Activated CD4-positive, alpha-beta T cell treated with anti-CD3 and anti-CD28 coated beads, Interleukin-2, amount 10 ng/mL, durations not matched to agents 24 days and 14 days (primary cell): ENCODE measurements at regions of chr4 and their contacts with region 1.

Region 1: GRCh38 chr4:151015459-151016347 is 619 bp upstream of the LRBA start:
- DNase-seq: peak; percentile 95
- H3K4me3 Mint-ChIP-seq: peak overlapping the region; percentile 97
- H3K27ac Mint-ChIP-seq: peak overlapping the region; percentile 99
- H3K4me1 Mint-ChIP-seq: peaks cover 27% of the 10 kb centered on the region
- H3K27me3 Mint-ChIP-seq: no peaks in the 10 kb centered on the region

Region 2: GRCh38 chr4:150436598-150437370 is 578.9 kb before region 1 on chr4:
- intact Hi-C with region 1: loop called (anchors 10 kb)
- DNase-seq: no peak
- H3K4me3 Mint-ChIP-seq: peak overlapping the region; percentile 2
- H3K27ac Mint-ChIP-seq: peak overlapping the region; percentile 20
- H3K4me1 Mint-ChIP-seq: peaks cover 8% of the 10 kb centered on the region
- H3K27me3 Mint-ChIP-seq: no peaks in the 10 kb centered on the region

Region 3: DNA sequence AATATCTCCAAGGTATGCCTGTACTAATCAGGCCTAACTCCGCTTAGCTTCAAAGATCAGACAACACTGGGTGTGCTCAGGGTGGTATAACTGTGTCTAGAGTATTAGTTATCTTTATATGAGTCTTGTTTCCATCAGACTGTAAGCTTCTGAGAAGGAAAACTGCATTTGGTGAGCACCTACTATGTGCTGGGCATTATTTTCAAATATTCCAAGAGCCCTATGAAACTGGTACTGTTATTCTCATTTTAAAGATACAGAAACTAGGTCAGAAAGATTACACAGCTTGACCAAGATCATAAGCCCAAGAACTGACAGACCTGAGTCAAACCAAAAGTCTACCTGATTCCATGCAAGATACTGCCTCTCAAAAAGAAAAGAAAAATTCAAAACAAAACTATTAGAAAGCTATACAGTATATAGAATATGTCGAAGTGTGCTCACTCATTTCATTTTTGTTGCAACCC is 45.0 kb before region 1 on chr4:
- intact Hi-C with region 1: loop called (anchors 2 kb)
- DNase-seq: peak; percentile 49
- H3K4me3 Mint-ChIP-seq: no peak overlapping the region
- H3K27ac Mint-ChIP-seq: peak overlapping the region; percentile 71
- H3K4me1 Mint-ChIP-seq: peaks cover 27% of the 10 kb centered on the region
- H3K27me3 Mint-ChIP-seq: no peaks in the 10 kb centered on the region

Region 4: GRCh38 chr4:150986085-150986484 is 29.6 kb before region 1 on chr4:
- intact Hi-C with region 1: loop called (anchors 1 kb)
- DNase-seq: peak; percentile 54
- H3K4me3 Mint-ChIP-seq: no peak overlapping the region
- H3K27ac Mint-ChIP-seq: peak overlapping the region; percentile 68
- H3K4me1 Mint-ChIP-seq: peaks cover 20% of the 10 kb centered on the region
- H3K27me3 Mint-ChIP-seq: no peaks in the 10 kb centered on the region

Region 5: GRCh38 chr4:151031831-151032605 is 16.3 kb after region 1 on chr4:
- intact Hi-C with region 1: loop called (anchors 1 kb)
- DNase-seq: no peak
- H3K4me3 Mint-ChIP-seq: peak overlapping the region; percentile 76
- H3K27ac Mint-ChIP-seq: peak overlapping the region; percentile 93
- H3K4me1 Mint-ChIP-seq: peaks cover 27% of the 10 kb centered on the region
- H3K27me3 Mint-ChIP-seq: no peaks in the 10 kb centered on the region

Region 6: DNA sequence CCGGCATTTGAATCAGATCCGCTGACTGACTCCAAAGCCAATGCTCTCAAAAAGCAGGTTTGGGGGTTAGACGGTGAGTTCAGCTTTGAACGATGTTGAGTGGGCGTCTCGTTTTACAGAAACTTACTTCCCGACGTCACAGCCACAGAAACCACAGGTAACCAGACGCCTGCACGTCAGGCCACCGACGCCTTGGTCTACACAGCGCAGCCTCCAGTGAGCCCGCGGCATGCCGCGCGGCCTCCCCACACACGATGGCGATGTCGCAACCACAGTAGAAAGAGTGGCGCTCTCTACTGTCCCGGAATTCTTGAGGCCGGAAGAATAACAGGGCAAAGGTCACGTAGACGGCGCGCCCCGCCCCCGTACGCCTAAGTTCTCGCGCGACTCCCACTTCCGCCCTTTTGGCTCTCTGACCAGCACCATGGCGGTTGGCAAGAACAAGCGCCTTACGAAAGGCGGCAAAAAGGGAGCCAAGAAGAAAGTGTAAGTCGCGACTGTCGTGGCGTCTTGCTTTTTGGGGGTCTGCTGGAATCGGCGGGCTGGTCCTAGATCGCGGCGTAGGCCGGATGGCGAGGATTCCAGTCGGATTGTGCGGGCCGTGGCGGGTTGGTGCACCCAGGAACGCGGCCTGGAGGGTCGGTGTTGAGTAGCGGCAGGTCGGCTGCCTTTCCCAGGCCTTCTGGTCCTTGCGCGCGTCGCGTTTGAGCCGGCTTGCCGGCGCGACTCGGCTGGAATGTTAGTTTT is 83.7 kb after region 1 on chr4 and contains the start of gene RPS3A:
- intact Hi-C with region 1: loop called (anchors 1 kb)
- DNase-seq: peak; percentile 100
- H3K4me3 Mint-ChIP-seq: peak within 1 kb of the TSS; percentile 98
- H3K27ac Mint-ChIP-seq: peak within 1 kb of the TSS; percentile 98
- H3K4me1 Mint-ChIP-seq: peaks cover 48% of the 10 kb centered on the region
- H3K27me3 Mint-ChIP-seq: peaks cover 4% of the 10 kb centered on the region
- total RNA-seq, gene RPS3A: 1,850 and 1,855 TPM in 2 replicates

Region 7: GRCh38 chr4:151260526-151260925 is 244.8 kb after region 1 on chr4:
- intact Hi-C with region 1: no loop called
- DNase-seq: no peak
- H3K4me3 Mint-ChIP-seq: no peak overlapping the region
- H3K27ac Mint-ChIP-seq: no peak overlapping the region
- H3K4me1 Mint-ChIP-seq: no peaks in the 10 kb centered on the region
- H3K27me3 Mint-ChIP-seq: no peaks in the 10 kb centered on the region